HEK293 (cell line): ENCODE measurements at regions of chr16 and their contacts with region 1.

Region 1: GRCh38 chr16:74998481-74999218 is at the start of gene ZNRF1:
- H3K4me3 ChIP-seq: peak within 1 kb of the TSS; percentile 63
- H3K27ac ChIP-seq: peak within 1 kb of the TSS; percentile 69; the same call in 1 of the 2 replicates
- H3K4me1 ChIP-seq: peaks cover 3% of the 10 kb centered on the region; the same call in 1 of the 2 replicates
- CTCF ChIP-seq: peak; percentile 79

Region 2: GRCh38 chr16:74726716-74727115 is 271.9 kb before region 1 on chr16:
- CTCF ChIA-PET with region 1: no interaction called
- POLR2A ChIA-PET with region 1: no interaction called
- H3K4me3 ChIP-seq: no peak overlapping the region
- H3K27ac ChIP-seq: no peak overlapping the region
- H3K4me1 ChIP-seq: no peaks in the 10 kb centered on the region
- CTCF ChIP-seq: peak; percentile 11; the same call in 1 of the 2 replicates

Region 3: GRCh38 chr16:74984535-74985296 is 13.9 kb before region 1 on chr16 and contains the start of gene WDR59:
- CTCF ChIA-PET with region 1: interaction called, 14 read pairs
- POLR2A ChIA-PET with region 1: interaction called, 9 read pairs
- H3K4me3 ChIP-seq: peak within 1 kb of the TSS; percentile 98
- H3K27ac ChIP-seq: peak within 1 kb of the TSS; percentile 6; the same call in 1 of the 2 replicates
- H3K4me1 ChIP-seq: 0 out of 2 replicates have a peak, but pooled peaks cover 3% of the 10 kb centered on the region
- CTCF ChIP-seq: peak; percentile 45; the same call in 1 of the 2 replicates